A549 (cell line): ENCODE measurements at regions of chr1 and their contacts with region 1.

Region 1: DNA sequence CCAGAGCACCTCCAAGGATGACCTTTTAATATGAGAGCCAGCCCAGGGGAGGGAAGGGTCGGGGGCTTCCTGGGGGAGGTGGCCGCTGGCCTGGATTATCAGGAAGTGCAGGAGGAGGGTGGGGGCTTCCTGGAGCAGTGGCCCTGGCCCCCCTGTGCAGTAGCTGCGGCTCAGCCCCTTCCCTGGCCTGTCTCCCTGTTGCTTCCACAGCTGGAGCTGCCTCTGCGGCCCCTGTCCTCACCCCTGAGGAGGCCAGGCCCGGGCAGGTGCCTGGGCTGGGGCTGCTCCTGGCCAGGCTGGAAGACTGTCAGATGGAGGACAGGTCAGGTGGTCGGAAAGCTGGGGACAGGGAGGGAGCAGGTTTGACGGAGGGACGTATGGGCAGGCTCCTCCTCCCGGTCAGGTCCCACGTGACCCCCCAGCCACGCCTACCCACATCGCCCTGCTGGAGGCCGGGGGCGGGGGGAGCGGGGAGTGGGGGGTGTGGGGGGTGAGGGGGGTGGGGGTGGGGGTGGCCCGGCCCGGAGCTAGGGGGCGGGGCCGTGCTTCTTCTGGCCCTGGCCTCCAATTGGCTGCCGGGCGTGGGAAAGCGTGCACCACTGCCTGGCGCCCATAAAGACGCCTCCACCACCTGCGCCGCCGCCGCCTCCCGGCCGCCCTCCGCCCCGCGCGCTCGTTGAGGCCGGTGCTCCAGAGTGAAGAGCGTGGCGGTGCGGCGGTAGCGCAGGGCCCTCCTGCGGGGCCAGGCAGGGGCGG is 10.2 kb upstream of the TNFRSF14 start:
- DNase-seq: peak; percentile 88 to 89
- ATAC-seq: peak; percentile 64 to 79
- H3K4me3 ChIP-seq: peak overlapping the region; percentile 74
- H3K27ac ChIP-seq: peak overlapping the region; percentile 89 to 91
- H3K4me1 ChIP-seq: peaks cover 37% of the 10 kb centered on the region
- CTCF ChIP-seq: no peak
- EP300 ChIP-seq: no peak
- POLR2A ChIP-seq: peak; percentile 88
- RAD21 ChIP-seq: no peak

Region 2: DNA sequence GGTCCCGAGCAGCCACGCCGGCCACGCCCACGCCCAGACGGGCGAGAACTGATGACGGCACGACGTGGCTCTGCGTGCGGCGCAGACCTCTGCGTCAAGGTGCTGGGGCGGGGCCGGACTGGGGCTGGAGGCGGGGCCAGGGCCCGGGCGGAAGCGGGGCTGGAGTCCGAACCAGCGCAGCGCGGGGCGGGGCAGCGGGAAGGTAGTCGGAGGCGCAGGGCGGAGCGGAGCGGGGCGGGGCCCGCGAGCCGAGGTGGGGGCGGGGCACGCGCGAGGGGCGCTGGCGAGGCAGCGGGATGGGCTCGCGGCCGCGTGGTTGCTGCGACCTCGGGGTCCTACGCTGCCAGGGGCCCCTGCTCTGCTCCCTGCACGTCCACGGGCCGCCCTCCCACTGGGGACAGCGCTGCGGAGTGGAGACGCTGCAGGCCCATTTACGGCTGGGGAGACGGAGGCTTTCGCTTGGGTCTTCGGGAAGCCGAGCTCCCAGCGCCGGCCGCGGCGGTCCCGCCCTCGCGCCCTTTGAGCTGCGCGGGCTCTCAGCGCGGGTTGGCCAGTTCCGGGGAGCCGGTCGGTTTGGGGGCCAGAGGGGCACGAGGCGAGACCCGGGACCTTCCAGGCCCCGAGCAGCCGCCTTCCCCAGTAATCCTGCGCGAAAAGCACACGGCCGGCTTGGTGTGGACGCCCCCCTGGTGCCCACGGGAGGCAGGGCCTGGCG is 133.3 kb before region 1 on chr1 and contains the start of gene PEX10:
- CTCF ChIA-PET with region 1: interaction called, 63 read pairs
- POLR2A ChIA-PET with region 1: interaction called, 3 read pairs
- DNase-seq: peak; percentile 56 to 93
- ATAC-seq: peak; percentile 65 to 79
- H3K4me3 ChIP-seq: peak within 1 kb of the TSS; percentile 80
- H3K27ac ChIP-seq: peak within 1 kb of the TSS; percentile 93 to 95
- H3K4me1 ChIP-seq: peaks cover 16% of the 10 kb centered on the region
- CTCF ChIP-seq: no peak
- EP300 ChIP-seq: no peak
- POLR2A ChIP-seq: peak; percentile 83
- RAD21 ChIP-seq: no peak
- polyA plus RNA-seq, gene PEX10: 12.3 and 12.6 TPM in 2 replicates

Region 3: GRCh38 chr1:2443277-2444137 is 102.4 kb before region 1 on chr1:
- CTCF ChIA-PET with region 1: interaction called, 51 read pairs
- POLR2A ChIA-PET with region 1: no interaction called
- DNase-seq: no peak
- ATAC-seq: peak in 1 of 2 experiments; percentile 43; a peak in 3 of 6 replicates
- H3K4me3 ChIP-seq: peak overlapping the region; percentile 44
- H3K27ac ChIP-seq: peak overlapping the region in 1 of 2 experiments; percentile 51; a peak in 3 of 6 replicates
- H3K4me1 ChIP-seq: peaks cover 27% of the 10 kb centered on the region
- CTCF ChIP-seq: peak; percentile 44
- EP300 ChIP-seq: no peak
- POLR2A ChIP-seq: no peak
- RAD21 ChIP-seq: peak; percentile 47 to 66

Region 4: DNA sequence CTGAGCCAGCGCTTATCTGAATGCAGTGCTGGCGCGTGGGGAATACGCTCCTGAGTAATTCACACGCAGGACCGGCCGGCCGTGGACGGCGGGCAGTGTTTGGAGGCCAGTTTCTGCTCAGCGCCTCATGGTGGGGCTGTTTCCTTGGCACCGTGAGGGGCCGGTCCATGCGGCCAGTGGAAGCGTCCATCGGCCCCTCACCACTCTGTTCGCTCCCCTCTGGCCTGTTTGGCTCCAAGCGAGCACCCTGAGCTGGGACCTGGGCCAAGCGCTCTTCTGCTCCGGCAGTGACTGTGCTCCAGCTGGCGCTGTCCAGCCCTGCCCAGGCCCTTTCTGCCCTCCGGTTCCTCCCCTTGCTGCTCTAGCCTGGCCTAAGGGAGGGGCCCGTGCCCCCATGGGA is 86.2 kb before region 1 on chr1:
- CTCF ChIA-PET with region 1: interaction called, 16 read pairs
- POLR2A ChIA-PET with region 1: no interaction called
- DNase-seq: peak in 1 of 2 experiments; percentile 30
- ATAC-seq: peak in 1 of 2 experiments; percentile 74; a peak in 3 of 6 replicates
- H3K4me3 ChIP-seq: no peak overlapping the region
- H3K27ac ChIP-seq: no peak overlapping the region
- H3K4me1 ChIP-seq: no peaks in the 10 kb centered on the region
- CTCF ChIP-seq: no peak
- EP300 ChIP-seq: no peak
- POLR2A ChIP-seq: no peak
- RAD21 ChIP-seq: peak in 1 of 2 experiments; percentile 21; a peak in 2 of 5 replicates

Region 5: GRCh38 chr1:2525920-2526823 is 19.8 kb before region 1 on chr1 and contains the start of gene PANK4:
- CTCF ChIA-PET with region 1: interaction called, 36 read pairs
- POLR2A ChIA-PET with region 1: interaction called, 13 read pairs
- DNase-seq: peak; percentile 80 to 93
- ATAC-seq: peak; percentile 94 to 96
- H3K4me3 ChIP-seq: peak within 1 kb of the TSS; percentile 84
- H3K27ac ChIP-seq: peak within 1 kb of the TSS; percentile 94 to 99
- H3K4me1 ChIP-seq: peaks cover 34% of the 10 kb centered on the region
- CTCF ChIP-seq: no peak
- EP300 ChIP-seq: no peak
- POLR2A ChIP-seq: peak; percentile 55
- RAD21 ChIP-seq: no peak
- polyA plus RNA-seq, gene PANK4: 8.1 and 8.3 TPM in 2 replicates

Region 6: GRCh38 chr1:2556277-2556677 is 10.3 kb after region 1 on chr1 and contains the start of gene TNFRSF14:
- CTCF ChIA-PET with region 1: interaction called, 11 read pairs
- POLR2A ChIA-PET with region 1: no interaction called
- DNase-seq: no peak
- ATAC-seq: peak in 1 of 2 experiments; percentile 43; a peak in 3 of 6 replicates
- H3K4me3 ChIP-seq: no peak within 1 kb of the TSS
- H3K27ac ChIP-seq: 0 out of 6 replicates have a peak within 1 kb of the TSS, but pooled peaks of 1 of the 2 experiments have one; percentile 30
- H3K4me1 ChIP-seq: peaks cover 6% of the 10 kb centered on the region; the same call in 1 of the 3 replicates
- CTCF ChIP-seq: no peak
- EP300 ChIP-seq: no peak
- POLR2A ChIP-seq: no peak
- RAD21 ChIP-seq: no peak
- polyA plus RNA-seq, gene TNFRSF14: 0.16 and 0.29 TPM in 2 replicates

Region 7: DNA sequence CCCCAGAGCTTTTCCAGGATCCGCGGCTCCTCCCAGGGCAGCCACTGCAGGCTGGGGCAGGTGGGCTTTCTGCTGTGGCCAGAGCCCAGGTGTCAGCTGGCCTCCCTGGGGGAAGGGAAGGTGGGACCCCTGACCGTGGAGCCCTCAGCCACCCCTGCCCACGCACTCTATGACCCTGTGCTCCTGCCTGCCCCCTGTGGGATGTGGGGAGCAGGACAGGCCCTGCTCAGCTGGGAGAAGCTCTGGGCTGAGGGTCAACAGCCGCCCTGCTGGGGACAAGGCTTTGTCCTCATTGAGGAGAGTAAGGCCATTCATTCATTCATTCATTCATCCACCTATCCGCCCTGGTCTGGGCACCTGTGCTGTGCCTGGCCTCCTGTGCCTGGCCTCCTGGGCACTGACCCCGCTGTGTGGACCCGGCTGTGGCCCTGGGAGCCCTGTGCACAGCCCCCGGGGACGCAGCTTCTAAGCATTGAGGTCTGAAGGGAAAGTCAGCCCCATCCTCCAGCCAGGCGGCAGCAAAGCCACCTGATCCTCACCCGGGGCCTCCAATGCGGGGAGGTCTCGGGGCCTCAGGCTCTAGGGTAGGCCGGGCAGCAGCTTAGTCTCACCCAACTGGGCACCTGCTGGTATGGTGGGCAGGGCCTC is 16.1 kb after region 1 on chr1:
- CTCF ChIA-PET with region 1: interaction called, 10 read pairs
- POLR2A ChIA-PET with region 1: no interaction called
- DNase-seq: no peak
- ATAC-seq: peak in 1 of 2 experiments; percentile 68; a peak in 3 of 6 replicates
- H3K4me3 ChIP-seq: no peak overlapping the region
- H3K27ac ChIP-seq: no peak overlapping the region
- H3K4me1 ChIP-seq: no peaks in the 10 kb centered on the region
- CTCF ChIP-seq: no peak
- EP300 ChIP-seq: no peak
- POLR2A ChIP-seq: no peak
- RAD21 ChIP-seq: no peak

Region 8: DNA sequence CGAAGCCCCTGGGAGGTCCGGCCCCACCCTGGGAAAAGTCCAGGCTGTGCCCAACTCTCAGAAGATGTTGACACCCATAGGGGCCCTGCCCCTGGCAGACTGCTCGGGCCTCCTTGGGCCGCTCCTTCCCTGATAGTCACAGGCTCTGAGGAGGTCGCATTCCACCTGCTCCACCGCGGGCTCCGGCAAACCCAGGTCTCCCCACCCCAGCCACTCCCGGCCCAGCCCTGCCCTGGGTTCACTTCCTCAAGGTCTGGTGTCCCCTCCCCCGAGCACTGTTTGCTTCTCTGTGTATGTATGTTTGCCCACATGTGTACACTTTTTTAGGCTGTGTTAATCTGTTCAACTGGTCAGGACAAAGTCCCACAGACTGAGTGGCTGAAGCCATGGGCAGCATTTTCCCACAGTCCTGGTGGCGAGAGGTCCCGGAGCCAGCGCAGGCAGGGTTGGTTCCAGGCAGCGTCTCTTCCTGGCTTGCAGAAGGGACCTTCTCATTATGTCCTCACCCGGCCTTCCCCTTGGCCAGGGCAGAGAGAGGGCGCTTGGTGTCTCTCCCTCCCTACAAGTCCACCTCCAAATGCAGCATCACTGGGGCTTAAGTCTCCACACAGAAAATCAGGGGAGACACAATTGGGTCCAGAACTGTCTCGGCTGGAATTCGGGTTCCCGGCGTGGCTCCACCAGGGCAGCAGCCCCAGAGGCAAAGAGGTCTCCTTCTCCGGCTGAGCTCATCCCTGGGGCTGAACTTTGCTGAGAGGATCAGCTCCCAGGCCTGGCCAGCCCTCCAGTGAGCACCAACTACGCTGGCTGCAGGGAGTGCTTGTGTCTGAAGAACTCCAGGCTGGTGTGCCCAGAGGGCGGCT is 30.1 kb after region 1 on chr1:
- CTCF ChIA-PET with region 1: no interaction called
- POLR2A ChIA-PET with region 1: no interaction called
- DNase-seq: peak in 1 of 2 experiments; percentile 18
- ATAC-seq: no peak; a peak in 1 of 6 replicates
- H3K4me3 ChIP-seq: no peak overlapping the region
- H3K27ac ChIP-seq: no peak overlapping the region
- H3K4me1 ChIP-seq: no peaks in the 10 kb centered on the region
- CTCF ChIP-seq: no peak
- EP300 ChIP-seq: no peak
- POLR2A ChIP-seq: no peak
- RAD21 ChIP-seq: no peak